Activated CD8-positive, alpha-beta T cell treated with anti-CD3 and anti-CD28 coated beads for 36 hours (primary cell): ENCODE measurements at regions of chr3 and their contacts with region 1.

Region 1: GRCh38 chr3:12841149-12841970 is at the start of gene RPL32:
- DNase-seq: peak; percentile 90
- ATAC-seq: peak; percentile 94
- H3K4me3 Mint-ChIP-seq: peak within 1 kb of the TSS; percentile 96
- H3K27ac Mint-ChIP-seq: peak within 1 kb of the TSS; percentile 99
- H3K4me1 Mint-ChIP-seq: peaks cover 32% of the 10 kb centered on the region
- H3K27me3 Mint-ChIP-seq: no peaks in the 10 kb centered on the region
- CTCF ChIP-seq: peak; percentile 82
- total RNA-seq, gene RPL32: 2,861 to 2,981 TPM

Region 2: DNA sequence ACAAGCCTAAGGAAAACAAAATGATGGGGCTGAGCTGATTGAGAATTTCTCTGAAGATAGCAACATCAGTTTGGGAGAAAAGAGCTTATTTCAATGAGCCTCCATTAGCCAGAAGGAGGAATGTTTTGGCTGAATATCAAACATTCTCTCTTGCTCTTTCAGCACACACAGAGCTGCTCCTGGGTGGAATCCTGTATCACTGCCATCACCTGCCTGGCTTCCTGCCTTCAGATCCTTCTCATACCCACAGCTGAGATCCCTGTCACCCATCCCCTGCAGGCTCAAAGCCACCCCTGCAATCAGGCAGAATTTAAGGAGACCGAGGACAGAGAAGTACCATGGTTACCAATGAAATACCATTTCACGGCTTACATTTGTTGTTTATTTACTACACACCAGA is 864.4 kb before region 1 on chr3:
- CTCF ChIA-PET with region 1: no interaction called
- POLR2A ChIA-PET with region 1: no interaction called
- intact Hi-C with region 1: no loop called
- DNase-seq: no peak
- ATAC-seq: no peak
- H3K4me3 Mint-ChIP-seq: no peak overlapping the region
- H3K27ac Mint-ChIP-seq: no peak overlapping the region
- H3K4me1 Mint-ChIP-seq: no peaks in the 10 kb centered on the region
- H3K27me3 Mint-ChIP-seq: peaks cover 22% of the 10 kb centered on the region
- CTCF ChIP-seq: no peak

Region 3: GRCh38 chr3:12782172-12782815 is 59.1 kb before region 1 on chr3:
- CTCF ChIA-PET with region 1: interaction called, 11 read pairs
- POLR2A ChIA-PET with region 1: interaction called, 4 read pairs
- intact Hi-C with region 1: no loop called
- DNase-seq: peak; percentile 34
- ATAC-seq: no peak
- H3K4me3 Mint-ChIP-seq: no peak overlapping the region
- H3K27ac Mint-ChIP-seq: no peak overlapping the region
- H3K4me1 Mint-ChIP-seq: no peaks in the 10 kb centered on the region
- H3K27me3 Mint-ChIP-seq: peaks cover 10% of the 10 kb centered on the region
- CTCF ChIP-seq: no peak

Region 4: GRCh38 chr3:12810013-12810780 is 31.2 kb before region 1 on chr3:
- CTCF ChIA-PET with region 1: interaction called, 33 read pairs
- POLR2A ChIA-PET with region 1: interaction called, 155 read pairs
- intact Hi-C with region 1: no loop called
- DNase-seq: peak; percentile 97
- ATAC-seq: peak; percentile 100
- H3K4me3 Mint-ChIP-seq: peak overlapping the region; percentile 59
- H3K27ac Mint-ChIP-seq: peak overlapping the region; percentile 54
- H3K4me1 Mint-ChIP-seq: peaks cover 7% of the 10 kb centered on the region
- H3K27me3 Mint-ChIP-seq: no peaks in the 10 kb centered on the region
- CTCF ChIP-seq: peak; percentile 96

Region 5: DNA sequence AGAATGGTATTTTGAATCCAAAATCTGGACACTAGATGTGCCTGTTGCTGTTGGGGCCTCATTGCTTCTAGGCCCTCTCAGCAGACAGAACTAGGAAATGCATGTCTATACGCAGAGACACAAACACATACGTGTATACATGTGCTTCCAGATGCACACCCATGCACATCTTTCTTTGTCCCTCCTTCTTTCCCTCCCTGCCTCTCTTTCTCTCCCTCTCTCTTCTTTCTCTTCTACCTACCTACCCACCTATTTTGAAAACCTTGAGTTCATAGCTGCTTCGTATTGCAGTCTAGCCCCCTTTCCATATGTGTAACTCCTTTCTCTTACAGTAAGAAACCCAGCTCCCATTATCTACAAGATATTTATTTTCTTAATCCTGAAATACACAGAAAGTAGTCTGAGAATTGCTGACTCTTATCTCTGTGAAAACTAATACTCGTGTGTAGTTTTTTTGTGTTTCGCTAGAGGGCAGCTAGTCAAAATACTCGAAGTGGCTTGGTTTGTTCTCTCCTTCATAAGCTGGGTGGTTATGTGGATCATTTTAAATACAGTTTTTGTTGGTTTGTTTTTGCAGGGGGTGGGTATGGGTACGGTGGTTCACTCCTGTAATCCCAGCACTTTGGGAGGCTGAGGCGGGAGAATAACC is 18.5 kb before region 1 on chr3:
- CTCF ChIA-PET with region 1: interaction called, 11 read pairs
- POLR2A ChIA-PET with region 1: interaction called, 155 read pairs
- intact Hi-C with region 1: no loop called
- DNase-seq: no peak
- ATAC-seq: no peak
- H3K4me3 Mint-ChIP-seq: no peak overlapping the region
- H3K27ac Mint-ChIP-seq: no peak overlapping the region
- H3K4me1 Mint-ChIP-seq: no peaks in the 10 kb centered on the region
- H3K27me3 Mint-ChIP-seq: no peaks in the 10 kb centered on the region
- CTCF ChIP-seq: no peak

Region 6: DNA sequence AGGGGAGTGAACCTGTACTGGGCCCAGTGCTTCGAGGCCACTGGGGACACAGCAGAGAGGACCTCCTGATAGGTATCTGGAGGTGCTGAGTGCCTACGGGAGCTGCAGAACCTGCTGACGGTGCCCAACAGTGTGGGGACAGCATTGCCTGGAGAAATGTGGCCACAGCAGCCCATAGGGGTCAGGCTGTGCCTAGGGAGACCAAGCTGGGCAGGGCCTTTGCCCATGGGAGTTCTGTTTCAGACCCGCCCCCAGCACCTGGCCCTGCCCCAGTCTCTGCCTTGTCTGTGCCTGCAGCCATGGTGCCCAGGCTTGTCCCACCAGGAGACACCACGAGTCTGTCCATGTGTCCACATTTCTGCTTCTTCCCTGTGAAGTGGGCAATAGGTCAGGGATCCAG is 15.3 kb after region 1 on chr3:
- CTCF ChIA-PET with region 1: interaction called, 10 read pairs
- POLR2A ChIA-PET with region 1: interaction called, 16 read pairs
- intact Hi-C with region 1: no loop called
- DNase-seq: no peak
- ATAC-seq: no peak
- H3K4me3 Mint-ChIP-seq: no peak overlapping the region
- H3K27ac Mint-ChIP-seq: no peak overlapping the region
- H3K4me1 Mint-ChIP-seq: no peaks in the 10 kb centered on the region
- H3K27me3 Mint-ChIP-seq: peaks cover 2% of the 10 kb centered on the region
- CTCF ChIP-seq: no peak

Region 7: DNA sequence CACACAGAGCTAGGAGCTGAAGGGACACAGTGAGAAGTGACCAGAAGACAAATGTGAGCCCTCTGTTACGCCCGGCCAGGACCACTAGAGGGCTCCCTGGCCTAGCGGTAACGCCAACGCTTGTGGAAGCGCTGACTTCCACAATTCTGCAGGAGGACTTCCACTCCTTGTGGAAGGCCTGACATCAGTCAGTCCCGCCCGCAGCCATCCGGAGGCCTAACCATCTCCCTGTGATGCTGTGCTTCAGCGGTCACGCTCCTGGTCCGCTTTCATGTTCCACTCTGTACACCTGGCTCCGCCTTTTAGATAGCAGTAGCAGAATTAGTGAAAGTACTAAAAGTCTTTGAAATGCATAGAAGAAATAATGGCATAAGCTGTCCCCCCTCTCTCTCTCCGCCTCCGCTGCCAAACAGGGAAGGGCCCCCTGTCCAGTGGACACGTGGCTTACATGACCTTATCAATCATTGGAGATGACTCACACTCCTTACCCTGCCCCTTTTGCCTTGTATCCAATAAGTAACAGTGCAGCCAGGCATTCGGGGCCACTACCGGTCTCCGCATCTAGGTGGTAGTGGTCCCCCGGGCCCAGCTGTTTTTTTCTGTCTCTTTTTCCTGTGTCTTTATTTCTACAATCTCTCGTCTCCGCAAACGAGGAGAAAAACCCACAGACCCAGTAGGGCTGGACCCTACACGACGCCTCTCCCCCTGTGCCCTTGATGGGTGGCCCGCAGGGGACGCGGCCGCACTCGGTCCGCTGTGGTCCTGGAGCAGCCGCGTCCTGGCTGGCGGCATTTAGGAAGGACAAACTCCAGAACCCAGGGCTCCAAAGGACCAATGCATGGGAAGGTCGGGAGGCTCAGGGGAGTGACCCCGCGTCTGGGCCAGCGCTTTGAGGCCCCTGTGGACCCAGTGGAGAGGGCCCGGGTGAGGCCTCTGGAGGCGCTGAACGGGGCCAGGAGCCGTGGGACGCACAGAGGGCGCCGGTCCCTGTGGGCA is 27.0 kb after region 1 on chr3:
- CTCF ChIA-PET with region 1: interaction called, 12 read pairs
- POLR2A ChIA-PET with region 1: interaction called, 12 read pairs
- intact Hi-C with region 1: no loop called
- DNase-seq: peak; percentile 80
- ATAC-seq: peak; percentile 81
- H3K4me3 Mint-ChIP-seq: peak overlapping the region; percentile 67
- H3K27ac Mint-ChIP-seq: no peak overlapping the region
- H3K4me1 Mint-ChIP-seq: peaks cover 6% of the 10 kb centered on the region
- H3K27me3 Mint-ChIP-seq: peaks cover 7% of the 10 kb centered on the region
- CTCF ChIP-seq: peak; percentile 92

Region 8: GRCh38 chr3:13133471-13133981 is 292.2 kb after region 1 on chr3:
- CTCF ChIA-PET with region 1: no interaction called
- POLR2A ChIA-PET with region 1: no interaction called
- intact Hi-C with region 1: no loop called
- DNase-seq: no peak
- ATAC-seq: no peak
- H3K4me3 Mint-ChIP-seq: no peak overlapping the region
- H3K27ac Mint-ChIP-seq: no peak overlapping the region
- H3K4me1 Mint-ChIP-seq: peaks cover 4% of the 10 kb centered on the region
- H3K27me3 Mint-ChIP-seq: peaks cover 2% of the 10 kb centered on the region
- CTCF ChIP-seq: no peak

Region 9: GRCh38 chr3:13401139-13401538 is 559.8 kb after region 1 on chr3:
- CTCF ChIA-PET with region 1: no interaction called
- POLR2A ChIA-PET with region 1: no interaction called
- intact Hi-C with region 1: no loop called
- DNase-seq: no peak
- ATAC-seq: no peak
- H3K4me3 Mint-ChIP-seq: no peak overlapping the region
- H3K27ac Mint-ChIP-seq: no peak overlapping the region
- H3K4me1 Mint-ChIP-seq: peaks cover 33% of the 10 kb centered on the region
- H3K27me3 Mint-ChIP-seq: no peaks in the 10 kb centered on the region
- CTCF ChIP-seq: no peak